AG04449 (cell line): ENCODE measurements at regions of chr20 and their contacts with region 1.

Region 1: GRCh38 chr20:354298-355064 is 7.6 kb downstream of the NRSN2 start:
- DNase-seq: no peak
- H3K4me3 ChIP-seq: no peak overlapping the region
- CTCF ChIP-seq: peak; percentile 96

Region 2: GRCh38 chr20:90651-91050 is 263.8 kb before region 1 on chr20:
- CTCF ChIA-PET with region 1: no interaction called
- POLR2A ChIA-PET with region 1: no interaction called
- DNase-seq: no peak
- H3K4me3 ChIP-seq: no peak overlapping the region
- CTCF ChIP-seq: no peak

Region 3: DNA sequence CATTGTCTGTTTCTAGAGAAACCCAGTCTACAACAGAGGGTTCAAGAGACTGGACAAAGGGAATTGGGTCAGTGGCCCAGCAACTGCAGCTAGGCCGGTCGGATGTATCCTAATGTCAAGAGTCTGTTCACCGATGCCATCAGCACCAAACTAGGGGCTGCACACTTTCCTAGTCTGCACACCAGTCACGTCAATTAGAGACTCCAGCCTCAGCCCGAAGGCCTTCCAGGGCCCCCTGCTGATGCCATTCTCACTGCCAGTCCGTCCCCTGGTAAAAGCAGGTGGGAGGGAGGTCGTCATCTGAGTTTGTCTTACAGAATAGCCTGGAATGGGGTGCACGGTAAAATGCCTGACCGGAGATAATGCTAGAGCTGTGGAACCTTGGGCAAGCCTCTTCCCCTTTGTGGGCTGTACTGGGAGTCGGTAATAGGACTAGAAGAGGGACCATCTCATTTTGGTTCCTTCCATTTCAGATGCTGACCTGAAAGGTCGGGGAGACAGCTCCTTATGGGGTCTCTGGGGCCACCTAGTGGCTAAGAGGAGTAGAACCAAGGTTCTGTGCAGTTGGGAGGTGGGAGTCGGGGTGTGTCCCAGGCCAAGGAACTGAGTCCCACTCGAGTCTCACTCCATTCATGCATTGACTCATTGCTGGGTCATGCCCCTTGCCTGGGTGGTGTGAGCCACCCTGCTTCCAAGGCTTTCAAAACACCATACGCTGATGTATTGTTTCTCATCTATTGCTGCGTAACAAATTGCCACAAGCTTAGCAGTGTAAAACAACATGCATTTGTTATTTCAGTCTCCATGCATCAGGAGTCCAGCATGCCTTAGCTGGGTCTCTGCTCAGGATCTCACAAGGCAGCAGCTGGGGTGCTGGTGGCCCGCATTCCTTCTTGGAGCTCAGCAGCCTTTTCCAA is 24.0 kb before region 1 on chr20:
- CTCF ChIA-PET with region 1: interaction called, 14 read pairs
- POLR2A ChIA-PET with region 1: no interaction called
- DNase-seq: no peak
- H3K4me3 ChIP-seq: no peak overlapping the region
- CTCF ChIP-seq: peak; percentile 84

Region 4: DNA sequence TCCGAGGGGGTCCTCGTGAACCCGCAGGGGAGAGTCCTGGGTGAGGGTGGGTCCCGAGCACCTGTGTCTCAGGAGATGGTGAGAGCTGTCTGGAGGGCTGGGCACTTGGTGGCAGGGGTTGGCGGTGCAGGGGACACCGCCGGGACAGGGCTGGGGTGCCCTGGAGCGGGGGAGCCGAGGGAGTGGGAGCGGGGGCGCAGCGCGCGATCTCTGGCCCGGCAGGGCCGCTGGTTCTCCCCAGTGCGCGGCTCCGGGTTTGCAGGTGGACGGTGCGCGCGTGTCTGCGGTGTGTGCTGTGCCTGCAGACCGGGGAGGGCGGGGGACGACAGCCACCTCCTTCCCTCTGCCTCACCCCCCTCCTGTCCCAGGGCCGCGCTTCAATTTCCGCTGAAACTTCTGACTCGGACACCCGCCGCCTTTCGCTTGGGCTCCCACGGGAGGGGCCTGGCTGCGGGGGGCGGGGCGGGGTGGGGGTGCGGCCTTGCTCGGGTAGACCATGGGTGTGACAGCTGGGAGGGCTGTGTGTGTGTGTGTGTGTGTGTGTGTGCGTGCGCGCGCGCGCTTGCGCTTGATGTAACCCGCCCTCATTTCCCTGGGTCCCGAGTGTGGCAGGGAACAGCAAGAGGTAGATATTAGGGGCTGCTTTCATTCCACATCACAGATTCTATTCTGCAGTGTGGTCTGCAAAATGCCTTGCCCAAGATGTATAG is 27.3 kb after region 1 on chr20:
- CTCF ChIA-PET with region 1: interaction called, 13 read pairs
- POLR2A ChIA-PET with region 1: interaction called, 3 read pairs
- DNase-seq: no peak
- H3K4me3 ChIP-seq: peak overlapping the region; percentile 83
- CTCF ChIP-seq: no peak

Region 5: GRCh38 chr20:431012-431904 is 76.8 kb after region 1 on chr20:
- CTCF ChIA-PET with region 1: interaction called, 71 read pairs
- POLR2A ChIA-PET with region 1: no interaction called
- DNase-seq: no peak
- H3K4me3 ChIP-seq: no peak overlapping the region
- CTCF ChIP-seq: peak; percentile 70

Region 6: GRCh38 chr20:483813-484644 is 129.5 kb after region 1 on chr20:
- CTCF ChIA-PET with region 1: interaction called, 142 read pairs
- POLR2A ChIA-PET with region 1: no interaction called
- DNase-seq: no peak
- H3K4me3 ChIP-seq: no peak overlapping the region
- CTCF ChIP-seq: no peak

Region 7: DNA sequence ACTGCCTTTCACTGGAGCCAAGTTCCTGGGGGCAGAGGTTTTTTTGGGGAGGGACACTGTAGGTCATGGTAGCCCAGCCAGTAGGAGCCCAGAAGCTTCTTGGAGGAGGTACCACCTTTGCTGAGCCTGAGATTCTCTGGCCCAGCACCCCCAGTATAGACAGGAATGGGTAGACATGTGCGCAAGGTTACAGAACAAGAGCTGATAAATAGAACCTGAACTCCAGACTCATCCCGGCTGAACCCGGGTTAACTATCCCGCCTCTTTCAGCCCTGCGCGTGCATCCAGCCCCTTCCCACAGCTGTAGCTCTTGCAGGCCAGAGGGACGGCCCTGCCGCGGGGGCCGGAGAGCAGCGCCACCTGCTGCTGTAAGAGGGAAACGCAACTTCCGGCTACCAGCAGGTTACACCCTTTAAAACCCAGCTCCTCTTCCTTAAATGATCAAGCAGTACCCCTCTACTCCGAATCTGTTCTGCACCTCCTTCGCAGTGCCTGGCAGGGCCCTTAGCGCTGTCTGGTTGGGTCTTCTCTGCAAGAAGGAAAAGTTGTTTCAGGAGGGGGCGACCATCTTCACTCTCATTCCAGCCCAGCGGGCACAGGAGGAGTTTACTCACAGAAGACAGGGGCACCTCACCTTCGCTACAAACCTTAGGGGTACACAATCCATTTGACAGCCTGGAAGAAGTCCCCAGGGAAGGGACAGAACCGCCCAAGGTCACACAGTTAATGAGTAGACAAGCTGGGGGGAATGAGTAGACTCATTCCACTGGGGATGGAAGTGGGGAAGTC is 291.0 kb after region 1 on chr20:
- CTCF ChIA-PET with region 1: interaction called, 19 read pairs
- POLR2A ChIA-PET with region 1: no interaction called
- DNase-seq: no peak
- H3K4me3 ChIP-seq: no peak overlapping the region
- CTCF ChIP-seq: peak; percentile 96